Activated B cell treated with CpG ODN at 0.5 μM for 24 hours (primary cell): ENCODE measurements at regions of chr3 and their contacts with region 1.

Region 1: GRCh38 chr3:183895296-183895695 is 10.6 kb upstream of the PARL start:
- DNase-seq: no peak
- ATAC-seq: peak; percentile 97
- H3K4me3 Mint-ChIP-seq: no peak overlapping the region
- H3K27ac Mint-ChIP-seq: no peak overlapping the region
- H3K4me1 Mint-ChIP-seq: peaks cover 4% of the 10 kb centered on the region
- H3K27me3 Mint-ChIP-seq: peaks cover 22% of the 10 kb centered on the region
- CTCF ChIP-seq: no peak

Region 2: GRCh38 chr3:183502237-183503181 is 392.8 kb before region 1 on chr3:
- CTCF ChIA-PET with region 1: no interaction called
- POLR2A ChIA-PET with region 1: no interaction called
- intact Hi-C with region 1: no loop called
- DNase-seq: no peak
- ATAC-seq: no peak
- H3K4me3 Mint-ChIP-seq: no peak overlapping the region
- H3K27ac Mint-ChIP-seq: no peak overlapping the region
- H3K4me1 Mint-ChIP-seq: peaks cover 5% of the 10 kb centered on the region
- H3K27me3 Mint-ChIP-seq: no peaks in the 10 kb centered on the region
- CTCF ChIP-seq: no peak

Region 3: GRCh38 chr3:183884427-183885296 is 10.6 kb before region 1 on chr3 and contains the start of gene PARL:
- CTCF ChIA-PET with region 1: interaction called, 11 read pairs
- POLR2A ChIA-PET with region 1: interaction called, 3 read pairs
- intact Hi-C with region 1: no loop called
- DNase-seq: peak; percentile 94
- ATAC-seq: peak; percentile 99
- H3K4me3 Mint-ChIP-seq: peak within 1 kb of the TSS; percentile 98
- H3K27ac Mint-ChIP-seq: peak within 1 kb of the TSS; percentile 85
- H3K4me1 Mint-ChIP-seq: peaks cover 36% of the 10 kb centered on the region
- H3K27me3 Mint-ChIP-seq: peaks cover 2% of the 10 kb centered on the region
- CTCF ChIP-seq: no peak
- total RNA-seq, gene PARL: 57.6 and 57.8 TPM in 2 replicates

Region 4: DNA sequence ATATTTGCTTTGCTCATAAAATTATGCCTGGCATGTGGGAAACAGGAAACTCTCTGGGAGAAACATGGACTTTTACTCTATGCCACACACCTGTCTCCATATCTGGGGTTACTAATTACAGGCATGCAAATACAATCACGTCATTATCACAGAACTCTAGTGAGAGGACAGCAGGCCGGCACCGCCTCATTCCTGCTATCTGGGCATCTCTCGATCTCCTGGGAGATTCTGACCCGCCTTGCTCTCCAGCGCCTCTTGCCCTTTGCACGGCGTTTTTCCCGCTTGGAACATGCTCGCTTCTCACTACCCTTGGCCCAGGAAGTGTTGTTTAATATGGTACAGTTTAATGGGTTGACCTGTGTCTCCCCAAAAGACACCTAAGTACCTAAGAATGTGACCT is 34.8 kb after region 1 on chr3:
- CTCF ChIA-PET with region 1: no interaction called
- POLR2A ChIA-PET with region 1: no interaction called
- intact Hi-C with region 1: no loop called
- DNase-seq: no peak
- ATAC-seq: no peak
- H3K4me3 Mint-ChIP-seq: no peak overlapping the region
- H3K27ac Mint-ChIP-seq: no peak overlapping the region
- H3K4me1 Mint-ChIP-seq: no peaks in the 10 kb centered on the region
- H3K27me3 Mint-ChIP-seq: no peaks in the 10 kb centered on the region
- CTCF ChIP-seq: no peak

Region 5: GRCh38 chr3:184017672-184018423 is 122.6 kb after region 1 on chr3 and contains the start of gene ABCC5:
- CTCF ChIA-PET with region 1: interaction called, 29 read pairs
- POLR2A ChIA-PET with region 1: interaction called, 4 read pairs
- intact Hi-C with region 1: loop called (anchors 1 kb)
- DNase-seq: peak; percentile 70
- ATAC-seq: peak; percentile 96
- H3K4me3 Mint-ChIP-seq: peak within 1 kb of the TSS; percentile 100
- H3K27ac Mint-ChIP-seq: peak within 1 kb of the TSS; percentile 84
- H3K4me1 Mint-ChIP-seq: peaks cover 13% of the 10 kb centered on the region
- H3K27me3 Mint-ChIP-seq: peaks cover 12% of the 10 kb centered on the region
- CTCF ChIP-seq: peak; percentile 7
- total RNA-seq, gene ABCC5: 10.6 and 11.1 TPM in 2 replicates

Region 6: DNA sequence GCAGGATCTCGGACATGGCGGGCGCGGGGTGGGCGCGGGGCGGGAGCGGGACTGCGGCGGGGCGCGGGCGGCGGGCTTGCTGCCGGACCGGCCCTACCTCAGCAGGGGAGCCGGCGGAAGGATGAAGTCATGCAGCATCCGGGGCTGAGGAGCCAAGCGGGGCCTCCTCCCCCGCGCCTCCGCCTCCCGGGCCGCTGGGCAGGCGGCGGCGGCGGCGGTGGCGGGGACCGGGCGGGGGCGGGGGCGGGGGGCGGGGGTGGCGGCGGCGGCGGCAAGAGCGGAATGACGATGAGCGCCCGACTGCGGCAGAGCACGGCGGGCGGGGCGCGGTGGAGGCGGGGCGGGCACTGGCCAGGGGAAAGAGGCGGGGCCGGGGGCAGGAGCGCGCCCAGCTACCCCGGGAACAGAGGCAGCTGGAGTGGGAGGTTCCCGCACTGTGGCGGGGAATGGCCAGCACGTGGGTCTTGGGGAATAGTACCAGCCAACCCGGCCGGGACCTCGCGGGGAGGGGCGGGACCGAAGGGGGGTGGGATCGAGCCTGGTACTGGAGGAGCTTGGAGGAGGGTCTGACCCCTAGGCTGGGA is 366.1 kb after region 1 on chr3 and contains the start of gene CAMK2N2:
- CTCF ChIA-PET with region 1: no interaction called
- POLR2A ChIA-PET with region 1: interaction called, 11 read pairs
- intact Hi-C with region 1: no loop called
- DNase-seq: peak; percentile 43
- ATAC-seq: peak; percentile 66
- H3K4me3 Mint-ChIP-seq: peak within 1 kb of the TSS; percentile 79
- H3K27ac Mint-ChIP-seq: no peak within 1 kb of the TSS
- H3K4me1 Mint-ChIP-seq: peaks cover 28% of the 10 kb centered on the region
- H3K27me3 Mint-ChIP-seq: peaks cover 51% of the 10 kb centered on the region
- CTCF ChIP-seq: no peak
- total RNA-seq, gene CAMK2N2: not detected in 2 replicates

Region 7: DNA sequence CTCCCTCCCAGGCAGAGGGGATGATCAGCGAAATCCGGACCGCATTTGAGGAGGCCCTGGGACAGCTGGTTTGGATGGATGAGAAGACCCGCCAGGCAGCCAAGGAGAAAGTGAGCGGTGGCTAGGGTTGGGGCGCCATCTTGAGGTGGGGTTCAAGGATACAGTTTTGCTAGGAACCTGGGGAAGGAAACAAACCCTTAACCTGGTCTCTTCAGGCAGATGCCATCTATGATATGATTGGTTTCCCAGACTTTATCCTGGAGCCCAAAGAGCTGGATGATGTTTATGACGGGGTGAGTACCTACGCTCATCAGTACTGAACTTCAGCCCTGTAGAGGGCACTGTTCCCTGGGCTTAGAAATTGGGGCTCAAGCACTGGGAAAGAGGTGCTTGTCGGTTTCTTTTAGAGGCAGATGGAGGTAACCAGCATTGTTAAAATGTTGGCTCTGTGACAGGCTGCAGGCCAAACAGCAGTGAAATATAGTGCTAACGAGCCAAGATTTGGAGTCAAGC is 394.2 kb after region 1 on chr3:
- CTCF ChIA-PET with region 1: interaction called, 12 read pairs
- POLR2A ChIA-PET with region 1: no interaction called
- intact Hi-C with region 1: loop called (anchors 1 kb)
- DNase-seq: peak; percentile 30
- ATAC-seq: peak; percentile 65
- H3K4me3 Mint-ChIP-seq: no peak overlapping the region
- H3K27ac Mint-ChIP-seq: no peak overlapping the region
- H3K4me1 Mint-ChIP-seq: peaks cover 3% of the 10 kb centered on the region
- H3K27me3 Mint-ChIP-seq: peaks cover 15% of the 10 kb centered on the region
- CTCF ChIP-seq: no peak

Region 8: DNA sequence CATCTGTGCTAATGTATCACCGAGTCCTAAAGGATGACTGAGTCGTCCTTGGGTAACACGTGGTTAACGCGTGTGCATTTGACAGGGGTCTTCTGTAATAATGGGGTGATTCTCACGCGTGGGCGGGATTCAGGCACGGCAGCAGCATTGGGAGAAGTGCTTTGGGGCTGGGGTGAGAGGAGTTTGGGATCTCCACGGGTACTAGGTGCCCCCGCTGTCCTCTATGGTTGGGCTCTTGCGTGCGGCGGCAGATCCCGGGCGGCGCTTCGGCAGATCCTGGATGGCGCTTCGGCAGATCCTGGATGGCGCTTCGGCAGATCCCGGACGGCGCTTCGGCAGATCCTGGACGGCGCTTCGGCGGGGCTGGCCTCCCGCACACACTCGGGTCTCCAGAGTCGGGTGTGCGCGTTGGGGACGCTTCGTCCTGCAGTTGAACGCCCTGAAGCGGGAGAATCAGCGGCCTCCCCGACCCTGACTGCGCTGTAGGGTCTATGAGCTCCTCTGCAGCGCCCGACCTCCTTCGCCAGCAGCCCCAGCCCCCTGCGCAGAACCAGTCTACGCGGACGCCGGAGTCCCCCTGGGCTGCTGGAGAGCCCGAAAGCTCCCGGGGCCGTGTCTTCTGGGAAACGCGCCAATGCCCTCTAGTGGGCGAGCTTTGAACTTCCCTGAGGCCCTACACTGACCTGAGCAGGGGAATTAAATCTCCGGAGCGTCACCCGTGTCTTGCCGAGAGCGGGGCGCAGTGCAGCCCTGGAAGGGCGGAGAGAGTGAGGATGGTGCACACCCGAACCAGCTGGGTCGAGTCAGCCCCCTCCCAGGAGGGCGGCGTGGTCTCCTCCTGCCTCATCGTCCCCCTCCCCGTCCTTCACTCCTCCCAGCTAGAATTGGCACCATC is 618.2 kb after region 1 on chr3:
- CTCF ChIA-PET with region 1: interaction called, 14 read pairs
- POLR2A ChIA-PET with region 1: interaction called, 5 read pairs
- intact Hi-C with region 1: loop called (anchors 1 kb)
- DNase-seq: peak; percentile 75
- ATAC-seq: peak; percentile 100
- H3K4me3 Mint-ChIP-seq: peak overlapping the region; percentile 57
- H3K27ac Mint-ChIP-seq: no peak overlapping the region
- H3K4me1 Mint-ChIP-seq: peaks cover 11% of the 10 kb centered on the region
- H3K27me3 Mint-ChIP-seq: peaks cover 41% of the 10 kb centered on the region
- CTCF ChIP-seq: no peak

Region 9: DNA sequence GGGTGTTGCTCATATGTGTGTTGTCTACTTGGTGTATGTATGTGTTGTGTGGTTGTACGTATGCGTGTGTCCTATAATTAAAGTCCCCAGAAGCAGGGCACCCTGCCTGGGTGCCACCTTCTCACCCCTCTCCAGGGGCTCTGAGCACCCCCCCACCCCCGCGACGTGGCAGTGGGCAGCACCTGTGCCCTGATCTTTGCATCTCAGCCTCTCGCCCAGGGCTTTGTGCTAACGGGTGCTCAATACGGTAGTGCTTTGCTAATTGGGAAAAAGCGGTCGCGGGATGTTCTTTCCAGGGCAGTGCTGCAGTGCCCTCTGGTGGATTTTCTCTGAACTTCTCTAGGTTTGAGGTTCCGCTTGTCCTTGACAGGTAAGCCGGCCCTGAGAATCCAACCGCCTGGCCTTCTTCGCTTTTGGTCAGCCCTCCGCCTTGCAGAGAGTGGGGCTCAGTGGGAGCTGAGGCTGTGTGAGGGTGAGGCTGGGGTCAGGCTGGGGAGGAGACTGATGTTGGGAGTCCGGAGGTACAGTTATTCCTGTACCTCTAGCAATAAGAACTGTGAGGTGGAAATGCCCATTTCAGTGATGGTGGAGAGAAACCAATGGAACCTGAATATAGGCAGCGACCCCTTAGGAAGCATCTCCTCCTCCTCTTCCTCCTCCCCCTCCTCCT is 648.7 kb after region 1 on chr3:
- CTCF ChIA-PET with region 1: interaction called, 3 read pairs
- POLR2A ChIA-PET with region 1: no interaction called
- intact Hi-C with region 1: loop called (anchors 1 kb)
- DNase-seq: peak; percentile 56
- ATAC-seq: peak; percentile 85
- H3K4me3 Mint-ChIP-seq: no peak overlapping the region
- H3K27ac Mint-ChIP-seq: no peak overlapping the region
- H3K4me1 Mint-ChIP-seq: peaks cover 12% of the 10 kb centered on the region
- H3K27me3 Mint-ChIP-seq: peaks cover 21% of the 10 kb centered on the region
- CTCF ChIP-seq: peak; percentile 79